Panc1 (cell line): ENCODE measurements at regions of chr2 and their contacts with region 1.

Region 1: GRCh38 chr2:203301667-203302066 is 26.5 kb upstream of the ABI2 start:
- DNase-seq: no peak
- ATAC-seq: no peak
- H3K4me3 ChIP-seq: no peak overlapping the region
- H3K27ac ChIP-seq: no peak overlapping the region
- H3K4me1 ChIP-seq: no peaks in the 10 kb centered on the region
- H3K27me3 ChIP-seq: no peaks in the 10 kb centered on the region
- CTCF ChIP-seq: no peak

Region 2: GRCh38 chr2:203209538-203209937 is 92.1 kb before region 1 on chr2:
- CTCF ChIA-PET with region 1: no interaction called
- POLR2A ChIA-PET with region 1: interaction called, 19 read pairs
- in situ Hi-C with region 1: no loop called
- intact Hi-C with region 1: no loop called
- DNase-seq: no peak
- ATAC-seq: no peak
- H3K4me3 ChIP-seq: no peak overlapping the region
- H3K27ac ChIP-seq: no peak overlapping the region
- H3K4me1 ChIP-seq: no peaks in the 10 kb centered on the region
- H3K27me3 ChIP-seq: no peaks in the 10 kb centered on the region
- CTCF ChIP-seq: no peak

Region 3: GRCh38 chr2:203360833-203361430 is 59.3 kb after region 1 on chr2:
- CTCF ChIA-PET with region 1: no interaction called
- POLR2A ChIA-PET with region 1: interaction called, 22 read pairs
- in situ Hi-C with region 1: no loop called
- intact Hi-C with region 1: no loop called
- DNase-seq: no peak
- ATAC-seq: no peak
- H3K4me3 ChIP-seq: no peak overlapping the region
- H3K27ac ChIP-seq: no peak overlapping the region
- H3K4me1 ChIP-seq: no peaks in the 10 kb centered on the region; the same call in 1 of the 2 replicates
- H3K27me3 ChIP-seq: no peaks in the 10 kb centered on the region
- CTCF ChIP-seq: no peak